CD4-positive, alpha-beta memory T cell (primary cell): ENCODE measurements at regions of chr7 and their contacts with region 1.

Region 1: GRCh38 chr7:66844552-66845378 is 76.3 kb upstream of the TMEM248 start:
- DNase-seq: peak; percentile 97 to 100 (median 100)
- H3K4me3 ChIP-seq: peak overlapping the region; percentile 78 to 92
- H3K4me3 Mint-ChIP-seq: peak overlapping the region; percentile 90 to 100 (median 96)
- H3K27ac ChIP-seq: peak overlapping the region; percentile 95
- H3K27ac Mint-ChIP-seq: peak overlapping the region; percentile 98 to 100 (median 100)
- H3K4me1 ChIP-seq: peaks cover 20% of the 10 kb centered on the region
- H3K4me1 Mint-ChIP-seq: peaks cover 8 to 30% (median 19%) of the 10 kb centered on the region in 4 donors
- H3K27me3 ChIP-seq: no peaks in the 10 kb centered on the region
- H3K27me3 Mint-ChIP-seq: peaks cover 3 to 4% of the 10 kb centered on the region in 2 donors

Region 2: GRCh38 chr7:66140924-66141323 is 703.8 kb before region 1 on chr7:
- CTCF ChIA-PET with region 1: no interaction called
- POLR2A ChIA-PET with region 1: no interaction called
- intact Hi-C with region 1: no loop called
- DNase-seq: no peak
- H3K4me3 ChIP-seq: no peak overlapping the region
- H3K4me3 Mint-ChIP-seq: no peak overlapping the region
- H3K27ac ChIP-seq: no peak overlapping the region
- H3K27ac Mint-ChIP-seq: peak overlapping the region in 1 of 7 donors; percentile 63
- H3K4me1 ChIP-seq: no peaks in the 10 kb centered on the region
- H3K4me1 Mint-ChIP-seq: peaks cover 3 to 15% (median 11%) of the 10 kb centered on the region in 4 donors
- H3K27me3 ChIP-seq: no peaks in the 10 kb centered on the region
- H3K27me3 Mint-ChIP-seq: no peaks in the 10 kb centered on the region

Region 3: GRCh38 chr7:66628361-66629140 is 216.2 kb before region 1 on chr7 and contains the start of gene KCTD7:
- CTCF ChIA-PET with region 1: no interaction called
- POLR2A ChIA-PET with region 1: interaction called, 3 read pairs
- intact Hi-C with region 1: loop called (anchors 2 kb)
- DNase-seq: peak; percentile 94 to 97 (median 95)
- H3K4me3 ChIP-seq: peak within 1 kb of the TSS; percentile 77 to 89
- H3K4me3 Mint-ChIP-seq: peak within 1 kb of the TSS; percentile 87 to 92 (median 91)
- H3K27ac ChIP-seq: peak within 1 kb of the TSS; percentile 89
- H3K27ac Mint-ChIP-seq: peak within 1 kb of the TSS; percentile 87 to 95 (median 93)
- H3K4me1 ChIP-seq: peaks cover 41% of the 10 kb centered on the region
- H3K4me1 Mint-ChIP-seq: peaks cover 36 to 46% (median 39%) of the 10 kb centered on the region in 4 donors
- H3K27me3 ChIP-seq: no peaks in the 10 kb centered on the region
- H3K27me3 Mint-ChIP-seq: no peaks in the 10 kb centered on the region
- total RNA-seq, gene KCTD7: 57.3 to 63.8 TPM

Region 4: GRCh38 chr7:66681491-66682349 is 163.0 kb before region 1 on chr7:
- CTCF ChIA-PET with region 1: no interaction called
- POLR2A ChIA-PET with region 1: interaction called, 3 read pairs
- intact Hi-C with region 1: loop called (anchors 1 kb)
- DNase-seq: peak; percentile 94 to 97 (median 95)
- H3K4me3 ChIP-seq: peak overlapping the region; percentile 78 to 84
- H3K4me3 Mint-ChIP-seq: peak overlapping the region; percentile 90 to 99 (median 92)
- H3K27ac ChIP-seq: peak overlapping the region; percentile 99
- H3K27ac Mint-ChIP-seq: peak overlapping the region; percentile 95 to 99 (median 98)
- H3K4me1 ChIP-seq: peaks cover 18% of the 10 kb centered on the region
- H3K4me1 Mint-ChIP-seq: peaks cover 14 to 38% (median 26%) of the 10 kb centered on the region in 4 donors
- H3K27me3 ChIP-seq: no peaks in the 10 kb centered on the region
- H3K27me3 Mint-ChIP-seq: no peaks in the 10 kb centered on the region

Region 5: DNA sequence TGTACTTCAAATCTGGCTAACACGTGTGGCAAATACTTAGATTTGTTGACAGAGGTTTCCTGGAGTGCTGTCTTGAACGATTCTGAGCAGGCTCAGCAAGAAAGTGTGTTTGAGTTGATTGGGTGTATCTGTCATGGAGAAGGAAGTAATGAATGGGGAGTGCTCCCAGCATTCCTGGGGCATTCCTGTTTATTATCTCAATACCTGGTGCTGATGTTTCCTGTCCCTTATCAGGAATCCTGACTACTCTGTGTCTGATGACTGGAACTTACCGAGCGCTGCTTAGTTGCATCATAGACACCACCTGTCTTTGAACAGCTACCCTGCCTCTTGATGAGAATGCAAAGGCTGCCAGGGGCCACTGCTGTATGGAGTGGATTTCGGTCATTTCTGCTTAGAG is 35.3 kb after region 1 on chr7:
- CTCF ChIA-PET with region 1: no interaction called
- POLR2A ChIA-PET with region 1: no interaction called
- intact Hi-C with region 1: no loop called
- DNase-seq: no peak
- H3K4me3 ChIP-seq: no peak overlapping the region
- H3K4me3 Mint-ChIP-seq: no peak overlapping the region
- H3K27ac ChIP-seq: no peak overlapping the region
- H3K27ac Mint-ChIP-seq: peak overlapping the region in 1 of 7 donors; percentile 13
- H3K4me1 ChIP-seq: no peaks in the 10 kb centered on the region
- H3K4me1 Mint-ChIP-seq: peaks cover 0 to 6% (median 2%) of the 10 kb centered on the region in 4 donors
- H3K27me3 ChIP-seq: no peaks in the 10 kb centered on the region
- H3K27me3 Mint-ChIP-seq: no peaks in the 10 kb centered on the region

Region 6: GRCh38 chr7:66920769-66921395 is 76.1 kb after region 1 on chr7 and contains the start of gene TMEM248:
- CTCF ChIA-PET with region 1: interaction called, 7 read pairs
- POLR2A ChIA-PET with region 1: interaction called, 44 read pairs
- intact Hi-C with region 1: loop called (anchors 1 kb)
- DNase-seq: peak; percentile 90 to 95 (median 93)
- H3K4me3 ChIP-seq: peak within 1 kb of the TSS; percentile 64 to 91
- H3K4me3 Mint-ChIP-seq: peak within 1 kb of the TSS; percentile 95 to 100 (median 98)
- H3K27ac ChIP-seq: peak within 1 kb of the TSS; percentile 78
- H3K27ac Mint-ChIP-seq: peak within 1 kb of the TSS; percentile 97 to 100 (median 99)
- H3K4me1 ChIP-seq: peaks cover 38% of the 10 kb centered on the region
- H3K4me1 Mint-ChIP-seq: peaks cover 22 to 49% (median 36%) of the 10 kb centered on the region in 4 donors
- H3K27me3 ChIP-seq: no peaks in the 10 kb centered on the region
- H3K27me3 Mint-ChIP-seq: peaks cover 0 to 2% of the 10 kb centered on the region in 2 donors
- total RNA-seq, gene TMEM248: 95.9 to 96.8 TPM